CD8-positive, alpha-beta memory T cell (primary cell): ENCODE measurements at regions of chr19 and their contacts with region 1.

Region 1: DNA sequence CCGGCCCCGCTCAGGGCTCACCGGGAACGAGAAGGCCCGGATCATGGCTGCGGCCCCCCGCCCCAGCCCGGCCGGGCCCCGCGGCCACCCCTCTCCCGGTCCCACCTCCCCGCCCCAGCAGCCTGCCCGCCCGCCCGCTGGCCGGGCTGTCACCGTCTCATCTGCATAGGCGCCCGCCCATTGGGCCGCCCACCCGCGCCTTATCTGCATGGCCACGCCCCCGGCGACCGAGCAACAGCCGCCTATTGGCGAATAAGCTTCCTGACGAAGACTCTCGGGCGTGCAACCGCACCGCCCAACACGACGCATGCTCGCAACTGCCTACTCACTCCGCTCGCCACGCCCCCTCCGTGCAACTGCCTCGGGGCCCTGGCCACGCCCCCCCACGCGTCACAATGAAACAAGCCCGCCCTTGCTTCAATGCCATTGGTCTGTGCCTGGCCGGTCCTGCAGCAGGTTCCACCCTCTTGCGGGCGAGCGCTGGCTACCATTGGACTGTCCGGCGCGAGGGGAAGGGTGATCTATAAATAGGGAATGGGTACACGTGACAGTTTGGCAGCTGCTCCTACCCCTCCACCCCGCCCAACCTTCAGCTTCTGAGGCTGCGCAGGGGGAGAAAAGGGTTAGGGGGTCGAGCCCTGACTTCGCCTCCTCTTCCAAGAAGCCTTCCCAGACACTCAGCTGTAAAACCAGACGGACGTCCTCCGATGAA is at the start of gene DACT3:
- DNase-seq: peak; percentile 99 to 100 (median 100)
- H3K4me3 ChIP-seq: peak within 1 kb of the TSS; percentile 63
- H3K4me3 Mint-ChIP-seq: peak within 1 kb of the TSS; percentile 80 to 95 (median 82)
- H3K27ac ChIP-seq: peak within 1 kb of the TSS; percentile 22
- H3K27ac Mint-ChIP-seq: peak within 1 kb of the TSS; percentile 72 to 95 (median 88)
- H3K4me1 ChIP-seq: peaks cover 22% of the 10 kb centered on the region
- H3K4me1 Mint-ChIP-seq: peaks cover 14 to 28% (median 21%) of the 10 kb centered on the region in 3 donors
- H3K27me3 ChIP-seq: peaks cover 21% of the 10 kb centered on the region
- H3K27me3 Mint-ChIP-seq: peaks cover 23 to 29% of the 10 kb centered on the region in 2 donors
- total RNA-seq, gene DACT3: 2.5 TPM

Region 2: GRCh38 chr19:46529622-46530462 is 131.3 kb before region 1 on chr19:
- CTCF ChIA-PET with region 1: interaction called, 11 read pairs
- POLR2A ChIA-PET with region 1: no interaction called
- DNase-seq: peak; percentile 56 to 79 (median 64)
- H3K4me3 ChIP-seq: no peak overlapping the region
- H3K4me3 Mint-ChIP-seq: no peak overlapping the region
- H3K27ac ChIP-seq: no peak overlapping the region
- H3K27ac Mint-ChIP-seq: peak overlapping the region in 1 of 8 donors; percentile 56
- H3K4me1 ChIP-seq: peaks cover 10% of the 10 kb centered on the region
- H3K4me1 Mint-ChIP-seq: peaks cover 10 to 12% (median 11%) of the 10 kb centered on the region in 3 donors
- H3K27me3 ChIP-seq: no peaks in the 10 kb centered on the region
- H3K27me3 Mint-ChIP-seq: peaks cover 2 to 17% of the 10 kb centered on the region in 2 donors

Region 3: DNA sequence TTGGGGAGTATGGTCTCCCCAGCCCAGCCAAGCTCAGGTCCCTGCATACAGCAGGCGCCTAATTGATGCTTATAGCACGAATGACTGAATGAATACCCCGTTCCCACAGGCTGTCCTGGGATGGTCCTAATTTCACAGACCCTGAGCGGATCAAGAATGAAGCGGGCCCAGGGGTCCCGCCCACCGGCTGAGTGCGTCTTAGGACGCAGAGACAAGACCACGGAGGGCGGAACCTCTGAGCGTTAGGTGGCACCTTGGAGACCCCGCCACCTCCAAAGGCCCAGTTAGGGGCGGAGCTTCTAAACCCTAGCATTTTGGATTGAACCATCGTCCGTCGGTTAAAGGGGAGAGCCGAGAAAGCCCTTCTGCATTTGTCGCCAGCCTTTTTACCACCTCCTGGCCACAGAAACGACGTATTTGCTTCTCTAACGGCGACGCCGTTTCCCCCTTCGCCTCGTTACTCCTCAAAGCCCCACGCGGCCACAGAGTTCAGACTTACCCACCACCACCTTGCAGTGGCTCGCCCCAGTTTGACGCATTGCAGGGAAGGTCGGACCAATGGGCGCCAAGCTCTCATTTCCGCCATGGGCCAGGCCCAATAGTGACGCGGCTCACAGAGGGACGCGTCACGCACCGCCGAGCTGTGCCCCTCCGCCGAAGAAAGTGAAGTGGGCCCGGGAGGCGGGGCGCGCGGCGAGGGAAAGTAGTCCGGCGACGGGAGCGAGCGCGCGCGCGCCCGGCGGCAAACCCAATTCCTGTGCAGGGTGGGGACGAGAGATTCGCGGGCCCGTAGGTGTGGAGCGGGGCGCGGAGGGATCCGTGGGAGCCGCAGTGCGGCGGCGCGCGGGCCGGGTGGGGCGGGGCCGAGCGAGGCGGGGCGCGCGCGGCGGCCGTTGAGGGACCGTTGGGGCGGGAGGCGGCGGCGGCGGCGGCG is 60.5 kb before region 1 on chr19:
- CTCF ChIA-PET with region 1: interaction called, 7 read pairs
- POLR2A ChIA-PET with region 1: interaction called, 18 read pairs
- DNase-seq: peak; percentile 91 to 98 (median 97)
- H3K4me3 ChIP-seq: peak overlapping the region; percentile 88
- H3K4me3 Mint-ChIP-seq: peak overlapping the region; percentile 94 to 100 (median 99)
- H3K27ac ChIP-seq: peak overlapping the region; percentile 100
- H3K27ac Mint-ChIP-seq: peak overlapping the region; percentile 100
- H3K4me1 ChIP-seq: peaks cover 26% of the 10 kb centered on the region
- H3K4me1 Mint-ChIP-seq: peaks cover 28 to 46% (median 36%) of the 10 kb centered on the region in 3 donors
- H3K27me3 ChIP-seq: no peaks in the 10 kb centered on the region
- H3K27me3 Mint-ChIP-seq: peaks cover 0 to 7% of the 10 kb centered on the region in 2 donors

Region 4: GRCh38 chr19:46614114-46614722 is 47.0 kb before region 1 on chr19:
- CTCF ChIA-PET with region 1: interaction called, 66 read pairs
- POLR2A ChIA-PET with region 1: interaction called, 7 read pairs
- DNase-seq: peak; percentile 63 to 86 (median 71)
- H3K4me3 ChIP-seq: no peak overlapping the region
- H3K4me3 Mint-ChIP-seq: peak overlapping the region in 5 of 7 donors; percentile 32 to 73 (median 37)
- H3K27ac ChIP-seq: no peak overlapping the region
- H3K27ac Mint-ChIP-seq: peak overlapping the region; percentile 47 to 83 (median 68)
- H3K4me1 ChIP-seq: peaks cover 80% of the 10 kb centered on the region
- H3K4me1 Mint-ChIP-seq: peaks cover 39 to 56% (median 48%) of the 10 kb centered on the region in 3 donors
- H3K27me3 ChIP-seq: no peaks in the 10 kb centered on the region
- H3K27me3 Mint-ChIP-seq: peaks cover 0 to 3% of the 10 kb centered on the region in 2 donors

Region 5: DNA sequence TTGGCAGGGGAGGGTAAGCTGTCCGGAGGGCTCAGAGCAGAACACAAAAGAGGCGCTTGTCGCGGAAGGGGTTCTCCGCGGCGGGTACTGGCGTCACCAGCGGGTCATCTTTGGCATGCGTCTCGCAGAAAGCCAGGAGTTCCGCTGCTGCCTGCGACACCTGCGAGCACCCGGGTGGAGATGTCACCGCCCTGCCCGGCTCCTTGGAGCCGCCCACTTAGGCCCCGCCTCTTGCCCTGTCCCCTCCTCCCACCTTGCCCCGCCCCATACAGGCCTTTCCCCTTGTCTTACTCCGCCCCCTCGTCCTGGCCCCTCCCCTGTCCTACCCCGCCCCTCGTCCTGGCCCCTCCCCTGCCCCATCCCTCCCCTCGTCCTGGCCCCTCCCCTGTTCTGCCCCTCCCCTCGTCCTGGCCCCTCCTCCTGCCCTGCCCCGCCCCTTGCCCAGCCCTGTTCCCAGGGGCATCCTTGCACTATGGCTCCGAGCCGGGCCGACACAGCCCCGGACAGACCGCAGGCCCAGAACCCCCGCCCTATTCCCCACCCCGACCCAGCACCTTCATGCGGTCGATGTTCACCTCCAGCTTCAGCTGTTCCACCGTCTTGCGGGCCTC is 27.0 kb before region 1 on chr19:
- CTCF ChIA-PET with region 1: interaction called, 13 read pairs
- POLR2A ChIA-PET with region 1: no interaction called
- DNase-seq: peak; percentile 83 to 93 (median 86)
- H3K4me3 ChIP-seq: peak overlapping the region; percentile 72
- H3K4me3 Mint-ChIP-seq: peak overlapping the region; percentile 57 to 76 (median 68)
- H3K27ac ChIP-seq: peak overlapping the region; percentile 35
- H3K27ac Mint-ChIP-seq: peak overlapping the region in 7 of 8 donors; percentile 75 to 93 (median 87)
- H3K4me1 ChIP-seq: peaks cover 30% of the 10 kb centered on the region
- H3K4me1 Mint-ChIP-seq: peaks cover 15 to 22% (median 21%) of the 10 kb centered on the region in 3 donors
- H3K27me3 ChIP-seq: no peaks in the 10 kb centered on the region
- H3K27me3 Mint-ChIP-seq: peaks cover 13 to 34% of the 10 kb centered on the region in 2 donors

Region 6: GRCh38 chr19:46639358-46640182 is 21.6 kb before region 1 on chr19:
- CTCF ChIA-PET with region 1: interaction called, 13 read pairs
- POLR2A ChIA-PET with region 1: no interaction called
- DNase-seq: no peak
- H3K4me3 ChIP-seq: peak overlapping the region; percentile 30
- H3K4me3 Mint-ChIP-seq: peak overlapping the region in 3 of 7 donors; percentile 42 to 58 (median 50)
- H3K27ac ChIP-seq: no peak overlapping the region
- H3K27ac Mint-ChIP-seq: no peak overlapping the region
- H3K4me1 ChIP-seq: peaks cover 21% of the 10 kb centered on the region
- H3K4me1 Mint-ChIP-seq: peaks cover 2 to 10% (median 5%) of the 10 kb centered on the region in 3 donors
- H3K27me3 ChIP-seq: no peaks in the 10 kb centered on the region
- H3K27me3 Mint-ChIP-seq: peaks cover 25 to 30% of the 10 kb centered on the region in 2 donors

Region 7: DNA sequence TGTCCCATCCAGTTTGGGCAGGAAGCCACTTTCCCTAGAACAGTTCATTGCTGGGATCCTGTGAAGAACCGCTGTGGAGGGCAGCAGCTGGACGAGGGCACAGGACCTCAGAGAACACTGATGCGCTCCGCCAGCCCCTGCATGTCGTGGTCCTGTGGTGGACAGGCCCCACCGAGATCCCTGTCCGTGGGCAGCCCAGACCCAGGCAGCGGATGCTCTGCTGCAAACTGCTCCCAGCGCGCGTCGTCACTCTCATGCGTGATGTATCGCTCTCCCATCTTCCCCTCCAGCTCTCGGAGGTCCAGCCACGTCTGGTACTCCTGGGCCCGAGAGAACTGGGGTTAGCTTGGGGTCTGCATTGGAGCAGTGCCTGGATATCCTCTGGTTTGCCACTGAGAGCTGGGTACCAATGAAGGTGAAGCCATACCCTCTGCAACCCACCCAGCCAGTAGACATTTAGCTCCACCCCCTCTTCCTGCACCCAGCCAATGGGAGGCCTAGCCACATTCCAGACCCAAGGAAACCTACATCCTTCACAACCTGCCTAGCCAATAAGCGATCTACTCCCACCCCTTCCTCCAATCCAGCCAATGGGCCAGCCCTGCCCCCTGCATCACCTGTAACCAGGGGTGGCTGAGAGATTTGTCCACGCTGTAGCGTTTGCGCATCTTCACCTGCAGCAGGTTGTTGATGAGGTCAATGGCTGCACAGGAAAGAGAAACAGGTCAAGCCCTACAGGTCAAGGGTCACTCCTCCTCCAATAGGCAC is 13.4 kb after region 1 on chr19:
- CTCF ChIA-PET with region 1: interaction called, 18 read pairs
- POLR2A ChIA-PET with region 1: no interaction called
- DNase-seq: no peak
- H3K4me3 ChIP-seq: no peak overlapping the region
- H3K4me3 Mint-ChIP-seq: no peak overlapping the region
- H3K27ac ChIP-seq: no peak overlapping the region
- H3K27ac Mint-ChIP-seq: peak overlapping the region in 3 of 8 donors; percentile 8 to 69 (median 66)
- H3K4me1 ChIP-seq: no peaks in the 10 kb centered on the region
- H3K4me1 Mint-ChIP-seq: peaks cover 0 to 9% (median 2%) of the 10 kb centered on the region in 3 donors
- H3K27me3 ChIP-seq: no peaks in the 10 kb centered on the region
- H3K27me3 Mint-ChIP-seq: no peaks in the 10 kb centered on the region